Heart right ventricle (tissue), 16 donors: ENCODE measurements at regions of chr9 and their contacts with region 1.

Region 1: GRCh38 chr9:35981699-35982098 is 23.7 kb upstream of the OR2S2 start:
- DNase-seq: no peak
- ATAC-seq: no peak
- H3K4me3 ChIP-seq: no peak overlapping the region
- H3K27ac ChIP-seq: no peak overlapping the region
- H3K4me1 ChIP-seq: no peaks in the 10 kb centered on the region
- H3K27me3 ChIP-seq: peaks cover 0 to 31% (median 0%) of the 10 kb centered on the region in 7 donors
- CTCF ChIP-seq: no peak

Region 2: DNA sequence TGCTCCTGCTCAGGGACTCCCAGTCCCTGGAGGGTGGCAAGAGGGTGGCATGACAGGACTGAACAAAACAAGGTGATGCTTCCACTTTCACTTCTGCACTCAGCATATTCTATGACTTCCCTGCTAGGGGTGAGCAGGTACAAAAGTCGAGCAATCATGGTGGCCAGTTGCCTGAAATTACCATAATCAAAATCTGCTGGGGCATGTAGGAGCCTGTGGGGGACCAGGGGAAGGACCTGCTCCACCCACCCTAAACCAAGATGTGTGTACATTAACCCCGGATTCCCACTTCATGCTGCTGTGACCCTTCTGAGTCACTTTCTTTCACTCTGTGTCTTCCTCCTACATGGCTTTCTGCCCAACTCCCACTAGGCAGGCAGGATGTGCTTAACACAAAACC is 1097.0 kb before region 1 on chr9:
- intact Hi-C with region 1: no loop called
- DNase-seq: no peak
- ATAC-seq: no peak
- H3K4me3 ChIP-seq: no peak overlapping the region
- H3K27ac ChIP-seq: no peak overlapping the region
- H3K4me1 ChIP-seq: no peaks in the 10 kb centered on the region
- H3K27me3 ChIP-seq: peaks cover 0 to 8% (median 0%) of the 10 kb centered on the region in 7 donors
- CTCF ChIP-seq: no peak

Region 3: GRCh38 chr9:36039696-36040095 is 58.0 kb after region 1 on chr9:
- intact Hi-C with region 1: loop called in 1 of 10 experiments (anchors 10 kb)
- DNase-seq: no peak
- ATAC-seq: no peak
- H3K4me3 ChIP-seq: no peak overlapping the region
- H3K27ac ChIP-seq: no peak overlapping the region
- H3K4me1 ChIP-seq: peaks cover 0 to 52% (median 28%) of the 10 kb centered on the region in 9 donors
- H3K27me3 ChIP-seq: no peaks in the 10 kb centered on the region
- CTCF ChIP-seq: no peak